HepG2 (cell line): ENCODE measurements at regions of chr6 and their contacts with region 1.

Region 1: DNA sequence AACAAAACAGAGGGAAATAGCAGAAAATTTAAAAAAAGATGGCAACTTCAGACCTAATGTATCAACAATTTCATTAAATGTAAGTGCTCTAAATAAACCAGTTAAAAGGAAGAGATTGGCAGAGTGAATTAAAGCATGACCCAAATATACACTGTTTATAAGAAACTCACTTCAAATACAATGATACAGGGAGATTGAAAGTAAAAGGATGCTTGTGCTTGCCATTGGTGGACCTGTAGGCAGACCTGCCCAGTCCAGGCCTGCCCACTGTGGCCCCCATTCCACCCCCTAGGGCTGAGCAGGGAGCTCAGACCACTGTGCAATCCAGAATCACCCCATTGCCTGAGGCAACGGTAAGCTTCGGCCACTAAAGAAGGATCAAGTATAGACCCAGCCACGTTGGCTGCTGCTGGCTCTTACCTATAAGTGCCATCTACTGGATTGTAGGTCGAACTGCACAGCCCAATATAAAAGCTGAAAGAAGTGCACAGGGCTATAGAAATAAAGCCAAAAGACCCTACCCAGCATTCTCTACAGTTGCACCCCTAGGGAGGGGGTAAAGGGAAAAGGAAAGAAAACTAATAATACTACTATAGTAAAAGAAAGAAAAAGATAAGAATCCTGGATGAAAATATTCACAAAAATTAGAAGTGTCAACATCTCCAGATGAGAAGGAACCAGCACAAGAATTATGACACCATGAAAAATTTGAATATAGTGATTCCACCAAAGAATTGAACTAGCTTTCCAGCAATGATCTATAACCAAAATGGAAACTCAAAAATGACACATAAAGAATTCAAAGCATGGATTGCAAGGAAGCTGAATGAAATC is 36.1 kb downstream of the PSMB1 start:
- DNase-seq: peak; percentile 74
- ATAC-seq: peak; percentile 100
- H3K4me3 ChIP-seq: peak overlapping the region in 1 of 3 experiments; percentile 24; a peak in 1 of 6 replicates
- H3K27ac ChIP-seq: no peak overlapping the region
- H3K4me1 ChIP-seq: 0 out of 2 replicates have a peak, but pooled peaks cover 5% of the 10 kb centered on the region
- H3K27me3 ChIP-seq: no peaks in the 10 kb centered on the region
- CTCF ChIP-seq: peak; percentile 93
- EP300 ChIP-seq: no peak
- POLR2A ChIP-seq: no peak
- RAD21 ChIP-seq: peak; percentile 87

Region 2: GRCh38 chr6:168956884-168957730 is 1559.9 kb before region 1 on chr6:
- CTCF ChIA-PET with region 1: interaction called, 12 read pairs
- POLR2A ChIA-PET with region 1: no interaction called
- in situ Hi-C with region 1: no loop called
- intact Hi-C with region 1: loop called (anchors 5 kb)
- DNase-seq: peak; percentile 67
- ATAC-seq: peak; percentile 99
- H3K4me3 ChIP-seq: no peak overlapping the region
- H3K27ac ChIP-seq: no peak overlapping the region
- H3K4me1 ChIP-seq: no peaks in the 10 kb centered on the region
- H3K27me3 ChIP-seq: peaks cover 2 to 23% of the 10 kb centered on the region in 2 experiments; a peak in 3 of 5 replicates
- CTCF ChIP-seq: peak; percentile 92
- EP300 ChIP-seq: no peak
- POLR2A ChIP-seq: no peak
- RAD21 ChIP-seq: peak; percentile 86

Region 3: GRCh38 chr6:169831450-169832246 is 685.4 kb before region 1 on chr6:
- CTCF ChIA-PET with region 1: interaction called, 24 read pairs
- POLR2A ChIA-PET with region 1: interaction called, 5 read pairs
- in situ Hi-C with region 1: no loop called
- intact Hi-C with region 1: loop called (anchors 1 kb)
- DNase-seq: peak; percentile 60
- ATAC-seq: peak; percentile 95
- H3K4me3 ChIP-seq: peak overlapping the region in 1 of 3 experiments; percentile 38; a peak in 2 of 6 replicates
- H3K27ac ChIP-seq: no peak overlapping the region
- H3K4me1 ChIP-seq: peaks cover 19% of the 10 kb centered on the region
- H3K27me3 ChIP-seq: peaks cover 0 to 24% of the 10 kb centered on the region in 2 experiments; a peak in 4 of 5 replicates
- CTCF ChIP-seq: peak; percentile 100
- EP300 ChIP-seq: no peak
- POLR2A ChIP-seq: no peak
- RAD21 ChIP-seq: peak; percentile 94

Region 4: DNA sequence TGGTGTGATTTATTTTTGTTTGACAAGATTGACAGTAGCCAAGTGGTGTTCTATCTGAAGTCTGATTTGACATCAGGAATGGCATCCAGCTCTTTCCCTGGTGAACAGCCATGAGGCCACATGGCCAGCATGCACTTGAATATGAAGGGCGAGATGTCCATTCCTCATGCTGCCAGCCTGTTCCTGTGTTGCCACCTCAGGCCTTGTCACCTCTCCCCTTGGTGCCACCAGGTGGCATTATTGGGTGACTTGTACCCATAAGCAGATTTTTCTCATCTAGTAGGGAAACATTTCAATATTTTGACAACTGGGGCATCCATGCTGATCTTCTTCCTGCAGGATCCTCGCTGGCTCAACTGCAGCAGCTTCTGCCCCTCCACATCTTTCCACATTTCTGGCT is 566.4 kb before region 1 on chr6:
- CTCF ChIA-PET with region 1: no interaction called
- POLR2A ChIA-PET with region 1: no interaction called
- in situ Hi-C with region 1: loop called (anchors 10 kb)
- intact Hi-C with region 1: loop called (anchors 5 kb)
- DNase-seq: no peak
- ATAC-seq: no peak
- H3K4me3 ChIP-seq: no peak overlapping the region
- H3K27ac ChIP-seq: no peak overlapping the region
- H3K4me1 ChIP-seq: no peaks in the 10 kb centered on the region
- H3K27me3 ChIP-seq: peaks cover 0 to 4% of the 10 kb centered on the region in 2 experiments; a peak in 2 of 5 replicates
- CTCF ChIP-seq: peak; percentile 48
- EP300 ChIP-seq: no peak
- POLR2A ChIP-seq: no peak
- RAD21 ChIP-seq: no peak

Region 5: DNA sequence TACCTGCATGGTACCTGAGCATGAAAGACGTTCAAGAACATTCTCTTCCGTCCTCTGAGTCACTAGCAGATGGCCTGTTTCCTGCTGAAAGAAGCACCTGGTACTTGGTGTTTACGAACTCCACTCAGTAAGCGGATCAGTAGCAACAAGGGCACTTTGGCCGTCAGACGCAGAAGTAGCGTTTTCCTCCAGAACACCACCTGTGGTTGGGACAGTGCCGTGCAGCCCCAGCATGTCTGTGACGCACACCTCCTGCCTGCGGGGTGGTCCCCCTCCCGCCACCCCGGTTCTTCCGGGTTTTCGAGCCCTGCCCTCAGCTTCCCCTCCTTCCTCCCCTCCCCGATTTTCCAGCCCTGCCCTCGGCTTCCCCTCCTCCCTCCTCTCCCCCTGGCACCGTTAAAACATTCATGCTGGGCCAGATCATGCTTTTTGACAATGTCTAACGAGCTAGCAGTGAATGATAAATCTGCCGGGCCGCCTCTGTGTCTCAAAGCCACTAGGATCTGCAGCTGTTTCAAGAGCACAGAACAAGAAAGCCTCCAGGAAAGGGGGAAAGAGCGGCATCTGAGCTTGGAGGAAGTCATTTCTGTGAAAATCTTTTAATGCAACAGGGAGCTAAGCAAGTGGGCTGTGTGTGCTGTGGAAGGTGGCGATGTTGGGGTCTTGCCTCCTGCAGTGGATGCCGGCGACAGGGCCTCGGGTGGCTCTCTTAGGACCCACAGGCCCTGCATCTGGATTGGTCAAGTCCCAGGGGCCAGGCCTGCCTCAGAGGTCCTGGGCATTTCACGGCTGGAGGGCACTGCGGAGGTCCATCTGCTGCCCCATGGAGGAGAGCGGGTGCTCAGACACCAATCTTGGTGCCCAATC is 557.6 kb before region 1 on chr6:
- CTCF ChIA-PET with region 1: no interaction called
- POLR2A ChIA-PET with region 1: no interaction called
- in situ Hi-C with region 1: loop called (anchors 10 kb)
- intact Hi-C with region 1: loop called (anchors 5 kb)
- DNase-seq: no peak
- ATAC-seq: peak; percentile 69
- H3K4me3 ChIP-seq: no peak overlapping the region
- H3K27ac ChIP-seq: no peak overlapping the region
- H3K4me1 ChIP-seq: no peaks in the 10 kb centered on the region
- H3K27me3 ChIP-seq: peaks cover 3 to 57% of the 10 kb centered on the region in 2 experiments; a peak in 4 of 5 replicates
- CTCF ChIP-seq: no peak
- EP300 ChIP-seq: no peak
- POLR2A ChIP-seq: no peak
- RAD21 ChIP-seq: no peak

Region 6: GRCh38 chr6:169969372-169970099 is 547.5 kb before region 1 on chr6:
- CTCF ChIA-PET with region 1: no interaction called
- POLR2A ChIA-PET with region 1: no interaction called
- in situ Hi-C with region 1: no loop called
- intact Hi-C with region 1: loop called (anchors 5 kb)
- DNase-seq: no peak
- ATAC-seq: no peak
- H3K4me3 ChIP-seq: no peak overlapping the region
- H3K27ac ChIP-seq: no peak overlapping the region
- H3K4me1 ChIP-seq: no peaks in the 10 kb centered on the region
- H3K27me3 ChIP-seq: peaks cover 18 to 74% of the 10 kb centered on the region in 2 experiments
- CTCF ChIP-seq: no peak
- EP300 ChIP-seq: no peak
- POLR2A ChIP-seq: no peak
- RAD21 ChIP-seq: no peak

Region 7: DNA sequence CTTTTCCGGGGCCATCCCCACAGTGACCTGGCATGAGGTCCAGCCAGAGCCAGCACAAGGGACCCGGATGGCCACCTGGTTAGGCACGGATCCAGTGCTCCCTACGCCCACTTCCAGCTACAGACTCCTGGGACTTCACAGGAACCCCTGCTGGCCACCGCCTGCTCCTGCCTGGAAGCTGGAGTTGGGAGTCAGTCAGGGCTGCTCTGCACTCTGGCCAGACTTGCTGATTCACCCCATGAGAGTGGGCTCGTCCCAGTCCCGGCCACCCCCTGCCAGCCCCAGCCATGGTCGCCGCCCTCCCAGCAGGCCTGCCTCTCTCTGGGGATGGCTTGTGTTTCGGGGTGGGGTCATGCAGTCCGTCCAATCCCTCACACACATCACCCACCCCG is 351.9 kb before region 1 on chr6:
- CTCF ChIA-PET with region 1: no interaction called
- POLR2A ChIA-PET with region 1: no interaction called
- in situ Hi-C with region 1: no loop called
- intact Hi-C with region 1: loop called (anchors 10 kb)
- DNase-seq: no peak
- ATAC-seq: peak; percentile 88
- H3K4me3 ChIP-seq: no peak overlapping the region
- H3K27ac ChIP-seq: no peak overlapping the region
- H3K4me1 ChIP-seq: no peaks in the 10 kb centered on the region
- H3K27me3 ChIP-seq: peaks cover 7 to 41% of the 10 kb centered on the region in 2 experiments; a peak in 4 of 5 replicates
- CTCF ChIP-seq: 0 out of 2 replicates have a peak, but pooled peaks have one; percentile 7
- EP300 ChIP-seq: no peak
- POLR2A ChIP-seq: no peak
- RAD21 ChIP-seq: no peak